ENCODE measurements at regions of chr5 and their contacts with region 1.

Region 1: GRCh38 chr5:139651853-139652787 is 4.0 kb downstream of the CXXC5 start:
- H3K4me3 Mint-ChIP-seq: peak overlapping the region; percentile 64
- H3K27ac Mint-ChIP-seq: peak overlapping the region; percentile 51
- H3K4me1 Mint-ChIP-seq: peaks cover 79% of the 10 kb centered on the region
- H3K27me3 Mint-ChIP-seq: peaks cover 21% of the 10 kb centered on the region

Region 2: GRCh38 chr5:139664086-139664693 is 12.1 kb after region 1 on chr5:
- intact Hi-C with region 1: loop called (anchors 2 kb)
- H3K4me3 Mint-ChIP-seq: peak overlapping the region; percentile 37
- H3K27ac Mint-ChIP-seq: peak overlapping the region; percentile 72
- H3K4me1 Mint-ChIP-seq: peaks cover 96% of the 10 kb centered on the region
- H3K27me3 Mint-ChIP-seq: peaks cover 2% of the 10 kb centered on the region

Region 3: GRCh38 chr5:139684881-139685749 is 33.0 kb after region 1 on chr5:
- intact Hi-C with region 1: loop called (anchors 5 kb)
- H3K4me3 Mint-ChIP-seq: no peak overlapping the region
- H3K27ac Mint-ChIP-seq: peak overlapping the region; percentile 0
- H3K4me1 Mint-ChIP-seq: peaks cover 48% of the 10 kb centered on the region
- H3K27me3 Mint-ChIP-seq: peaks cover 15% of the 10 kb centered on the region

Measured in dendritic cell treated with granulocyte-macrophage colony-stimulating factor and Interleukin-4, amounts not matched to agents 40 ng/mL and 50 ng/mL, for 4 days (primary cell).